WTC11 (cell line): ENCODE measurements at regions of chr4 and their contacts with region 1.

Region 1: DNA sequence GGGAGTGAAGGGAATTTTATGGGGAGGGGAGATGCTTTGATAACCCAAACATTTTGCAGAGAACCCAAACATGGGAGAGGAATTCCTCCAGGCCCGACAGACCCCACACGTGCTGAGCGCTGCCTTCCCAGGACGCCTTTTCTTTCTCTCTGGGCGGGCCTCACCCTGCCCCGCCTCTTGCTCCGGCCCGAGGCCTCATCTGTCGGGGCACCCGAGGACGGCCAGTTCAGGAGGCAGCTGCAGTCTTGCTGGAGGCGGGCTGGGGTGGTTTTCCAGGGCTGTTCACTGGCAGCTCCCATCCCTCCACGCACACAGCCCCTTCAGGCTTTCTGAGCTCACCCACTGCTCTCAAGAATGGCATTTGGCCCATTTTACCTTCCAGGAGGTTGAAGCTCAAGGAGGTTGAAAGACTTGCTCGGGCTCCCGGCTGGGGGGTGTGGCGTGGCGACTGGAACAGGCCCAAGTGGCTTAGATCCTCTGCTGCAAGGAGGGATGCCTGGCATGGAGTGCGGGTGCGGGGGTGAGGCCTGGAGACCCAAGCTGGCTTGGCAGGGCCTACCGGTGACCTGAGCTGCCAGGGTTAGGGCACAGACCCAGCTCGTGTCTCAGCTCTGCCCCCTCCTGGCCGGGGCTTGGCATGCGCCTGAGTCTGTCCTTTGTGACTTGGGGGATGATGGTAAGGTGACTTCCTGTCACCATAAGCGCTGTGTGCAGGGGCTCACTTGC is 99.2 kb downstream of the PSAPL1 start:
- DNase-seq: peak; percentile 91
- ATAC-seq: peak; percentile 94
- H3K4me3 Mint-ChIP-seq: no peak overlapping the region
- H3K27ac Mint-ChIP-seq: no peak overlapping the region
- H3K4me1 Mint-ChIP-seq: peaks cover 12% of the 10 kb centered on the region
- H3K27me3 Mint-ChIP-seq: peaks cover 2% of the 10 kb centered on the region; the same call in 1 of the 2 replicates
- CTCF ChIP-seq: peak; percentile 73

Region 2: GRCh38 chr4:7101692-7102515 is 233.6 kb before region 1 on chr4:
- CTCF ChIA-PET with region 1: interaction called, 11 read pairs
- POLR2A ChIA-PET with region 1: no interaction called
- DNase-seq: peak; percentile 82
- ATAC-seq: peak; percentile 87
- H3K4me3 Mint-ChIP-seq: peak overlapping the region; percentile 89
- H3K27ac Mint-ChIP-seq: no peak overlapping the region
- H3K4me1 Mint-ChIP-seq: peaks cover 15% of the 10 kb centered on the region
- H3K27me3 Mint-ChIP-seq: peaks cover 85% of the 10 kb centered on the region
- CTCF ChIP-seq: peak; percentile 41; the same call in 1 of the 2 replicates

Region 3: DNA sequence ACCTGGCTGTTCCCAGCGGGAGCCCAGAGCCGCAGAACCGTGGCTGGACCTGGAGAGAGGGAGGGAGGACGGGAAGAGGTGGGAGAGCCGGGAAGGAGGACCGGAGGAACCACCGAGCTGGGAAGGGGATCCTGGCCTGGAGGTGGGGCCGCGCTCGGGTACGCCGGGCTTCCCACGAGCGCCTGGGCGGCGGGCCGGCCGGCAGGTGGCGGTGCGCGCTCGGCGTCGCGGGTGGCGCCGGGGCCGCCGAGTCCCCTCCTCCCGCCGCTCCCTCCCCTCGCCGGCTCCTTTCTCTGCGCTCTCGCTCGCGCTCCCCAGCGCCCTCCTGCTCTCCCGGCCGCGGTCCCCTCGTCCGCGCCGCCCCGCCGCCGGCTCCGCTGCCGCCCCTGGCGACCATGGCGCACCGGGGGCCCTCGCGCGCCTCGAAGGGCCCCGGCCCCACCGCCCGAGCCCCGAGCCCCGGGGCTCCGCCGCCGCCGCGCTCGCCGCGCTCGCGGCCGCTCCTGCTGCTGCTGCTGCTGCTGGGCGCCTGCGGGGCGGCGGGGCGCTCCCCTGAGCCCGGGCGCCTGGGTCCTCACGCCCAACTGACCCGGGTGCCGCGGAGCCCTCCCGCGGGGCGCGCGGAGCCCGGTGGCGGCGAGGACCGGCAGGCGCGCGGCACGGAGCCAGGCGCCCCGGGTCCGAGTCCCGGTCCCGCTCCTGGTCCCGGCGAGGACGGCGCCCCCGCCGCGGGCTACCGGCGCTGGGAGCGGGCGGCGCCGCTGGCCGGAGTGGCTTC is 143.1 kb before region 1 on chr4 and contains the start of gene SORCS2:
- CTCF ChIA-PET with region 1: interaction called, 60 read pairs
- POLR2A ChIA-PET with region 1: no interaction called
- DNase-seq: peak; percentile 72
- ATAC-seq: peak; percentile 70
- H3K4me3 Mint-ChIP-seq: peak within 1 kb of the TSS; percentile 73
- H3K27ac Mint-ChIP-seq: no peak within 1 kb of the TSS
- H3K4me1 Mint-ChIP-seq: peaks cover 27% of the 10 kb centered on the region
- H3K27me3 Mint-ChIP-seq: peaks cover 50% of the 10 kb centered on the region
- CTCF ChIP-seq: peak; percentile 36; the same call in 1 of the 2 replicates
- total RNA-seq, gene SORCS2: 5.5 to 9.1 TPM (median 6.6 TPM) in 3 replicates

Region 4: DNA sequence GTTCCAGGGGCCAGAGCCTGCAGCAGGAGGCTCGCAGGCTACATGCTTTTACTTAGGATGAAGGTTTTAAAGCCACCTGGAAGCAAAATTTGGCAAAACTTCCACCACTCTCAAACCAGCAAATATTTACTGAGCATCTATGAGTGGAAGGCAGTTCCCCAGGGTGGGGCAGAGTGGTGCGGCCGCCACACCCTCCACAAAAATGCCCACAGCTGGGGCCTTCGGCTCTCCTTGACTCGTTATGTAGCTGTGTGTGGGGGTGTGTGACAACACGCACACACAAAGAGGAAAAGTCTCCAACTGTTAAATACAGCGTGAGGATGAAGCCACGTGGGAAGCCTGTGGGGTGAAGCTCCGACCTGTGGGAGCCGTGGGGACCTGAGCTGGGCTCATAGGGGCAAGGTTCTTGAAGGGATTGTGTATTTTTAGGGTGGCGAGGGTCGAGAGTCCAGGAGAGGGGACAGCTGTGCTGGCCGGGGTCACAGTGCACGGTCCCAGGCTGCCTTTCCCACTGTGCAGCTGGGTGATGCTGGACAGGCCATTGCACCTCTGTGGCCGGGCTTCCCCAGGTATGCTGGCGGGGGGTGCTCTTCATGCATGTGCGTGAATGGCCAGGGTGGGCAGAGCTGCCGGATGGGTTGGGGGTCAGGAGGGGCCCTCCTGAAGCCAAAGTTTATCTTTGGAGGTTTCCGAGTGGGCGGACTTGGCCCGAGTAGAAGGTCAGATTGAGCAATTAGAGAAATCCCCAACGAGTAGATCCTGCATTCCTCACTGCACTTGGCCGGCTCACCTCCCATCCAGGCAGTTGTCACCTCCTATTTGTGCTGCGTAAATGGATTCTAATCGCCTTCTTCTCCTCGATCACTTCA is 117.8 kb before region 1 on chr4:
- CTCF ChIA-PET with region 1: no interaction called
- POLR2A ChIA-PET with region 1: no interaction called
- DNase-seq: no peak
- ATAC-seq: no peak
- H3K4me3 Mint-ChIP-seq: no peak overlapping the region
- H3K27ac Mint-ChIP-seq: no peak overlapping the region
- H3K4me1 Mint-ChIP-seq: no peaks in the 10 kb centered on the region
- H3K27me3 Mint-ChIP-seq: no peaks in the 10 kb centered on the region; the same call in 1 of the 2 replicates
- CTCF ChIP-seq: no peak

Region 5: GRCh38 chr4:7295911-7296660 is 39.4 kb before region 1 on chr4:
- CTCF ChIA-PET with region 1: interaction called, 13 read pairs
- POLR2A ChIA-PET with region 1: no interaction called
- DNase-seq: peak; percentile 54
- ATAC-seq: no peak
- H3K4me3 Mint-ChIP-seq: no peak overlapping the region
- H3K27ac Mint-ChIP-seq: no peak overlapping the region
- H3K4me1 Mint-ChIP-seq: peaks cover 3% of the 10 kb centered on the region; the same call in 1 of the 2 replicates
- H3K27me3 Mint-ChIP-seq: no peaks in the 10 kb centered on the region
- CTCF ChIP-seq: no peak

Region 6: DNA sequence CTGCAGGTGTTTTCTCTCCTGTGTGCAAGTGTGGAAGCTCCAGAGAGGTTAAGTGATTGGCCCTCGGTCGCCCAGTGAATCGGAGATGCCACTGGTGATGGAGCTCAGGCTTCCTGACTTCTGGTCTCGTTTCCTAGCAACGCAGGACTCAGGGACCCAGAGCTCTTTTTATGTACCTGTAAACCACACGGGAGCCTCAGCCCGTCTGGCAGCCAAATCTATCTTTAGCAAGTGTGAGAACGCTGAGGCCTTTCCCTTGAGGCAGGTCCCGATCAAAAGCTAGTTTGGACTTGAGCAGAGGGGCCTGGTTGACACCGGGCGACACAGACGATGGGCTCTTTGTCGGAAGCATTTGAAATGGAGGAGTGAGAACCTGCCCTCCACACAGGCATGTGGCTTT is 26.3 kb before region 1 on chr4:
- CTCF ChIA-PET with region 1: interaction called, 11 read pairs
- POLR2A ChIA-PET with region 1: no interaction called
- DNase-seq: no peak
- ATAC-seq: no peak
- H3K4me3 Mint-ChIP-seq: no peak overlapping the region
- H3K27ac Mint-ChIP-seq: no peak overlapping the region; the same call in 1 of the 2 replicates
- H3K4me1 Mint-ChIP-seq: peaks cover 22% of the 10 kb centered on the region
- H3K27me3 Mint-ChIP-seq: no peaks in the 10 kb centered on the region
- CTCF ChIP-seq: no peak

Region 7: DNA sequence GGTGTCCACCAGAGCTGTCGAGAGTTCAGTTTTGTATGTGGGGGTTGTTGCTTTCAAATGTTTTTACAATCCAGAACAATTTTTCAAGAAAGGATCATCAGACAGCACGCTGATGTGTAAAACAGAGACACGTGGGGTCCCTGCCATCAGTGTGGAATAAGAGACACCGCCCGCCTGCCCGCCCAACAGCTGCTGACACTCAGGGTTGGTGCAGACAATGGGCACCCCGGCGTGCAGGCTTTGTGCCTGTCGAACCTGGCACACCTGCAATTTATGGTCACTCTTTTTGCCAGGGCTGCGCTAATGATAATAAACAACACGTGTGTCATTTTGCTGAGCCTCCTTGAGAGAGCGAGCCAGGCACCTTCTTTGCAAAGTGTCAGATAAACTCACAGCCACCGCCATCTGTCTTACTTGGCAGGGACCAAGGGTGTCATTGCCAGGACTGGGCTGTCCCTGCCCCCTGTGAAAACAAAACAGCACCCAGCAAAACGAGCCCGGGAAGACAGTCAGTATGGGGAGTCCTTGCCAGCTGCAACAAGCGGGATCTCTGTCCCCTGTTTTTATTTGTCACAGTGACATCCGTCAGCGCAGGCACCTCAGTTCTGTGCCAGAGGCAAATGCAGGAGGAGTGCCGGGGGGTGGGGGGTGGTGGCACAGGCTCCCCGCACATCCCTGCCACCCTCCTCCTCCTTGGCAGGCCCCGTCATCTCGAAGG is 30.1 kb after region 1 on chr4:
- CTCF ChIA-PET with region 1: interaction called, 14 read pairs
- POLR2A ChIA-PET with region 1: no interaction called
- DNase-seq: no peak
- ATAC-seq: no peak
- H3K4me3 Mint-ChIP-seq: no peak overlapping the region
- H3K27ac Mint-ChIP-seq: no peak overlapping the region
- H3K4me1 Mint-ChIP-seq: peaks cover 9% of the 10 kb centered on the region
- H3K27me3 Mint-ChIP-seq: no peaks in the 10 kb centered on the region
- CTCF ChIP-seq: no peak

Region 8: GRCh38 chr4:7403001-7403400 is 67.5 kb after region 1 on chr4:
- CTCF ChIA-PET with region 1: no interaction called
- POLR2A ChIA-PET with region 1: no interaction called
- DNase-seq: no peak
- ATAC-seq: no peak
- H3K4me3 Mint-ChIP-seq: no peak overlapping the region
- H3K27ac Mint-ChIP-seq: no peak overlapping the region
- H3K4me1 Mint-ChIP-seq: no peaks in the 10 kb centered on the region
- H3K27me3 Mint-ChIP-seq: peaks cover 26% of the 10 kb centered on the region
- CTCF ChIP-seq: no peak